ENCODE measurements at regions of chr14 and their contacts with region 1.

Region 1: GRCh38 chr14:68164711-68165113 is 345.1 kb downstream of the RAD51B start:
- DNase-seq: no peak
- ATAC-seq: no peak
- H3K4me3 ChIP-seq: no peak overlapping the region
- H3K27ac ChIP-seq: no peak overlapping the region
- H3K4me1 ChIP-seq: peaks cover 18% of the 10 kb centered on the region
- H3K27me3 ChIP-seq: no peaks in the 10 kb centered on the region
- CTCF ChIP-seq: no peak

Region 2: GRCh38 chr14:68229423-68230100 is 64.8 kb after region 1 on chr14:
- intact Hi-C with region 1: loop called (anchors 10 kb)
- DNase-seq: no peak
- ATAC-seq: no peak
- H3K4me3 ChIP-seq: no peak overlapping the region
- H3K27ac ChIP-seq: no peak overlapping the region
- H3K4me1 ChIP-seq: peaks cover 37% of the 10 kb centered on the region
- H3K27me3 ChIP-seq: no peaks in the 10 kb centered on the region
- CTCF ChIP-seq: no peak